OCI-LY7 (cell line): ENCODE measurements at regions of chr21 and their contacts with region 1.

Region 1: DNA sequence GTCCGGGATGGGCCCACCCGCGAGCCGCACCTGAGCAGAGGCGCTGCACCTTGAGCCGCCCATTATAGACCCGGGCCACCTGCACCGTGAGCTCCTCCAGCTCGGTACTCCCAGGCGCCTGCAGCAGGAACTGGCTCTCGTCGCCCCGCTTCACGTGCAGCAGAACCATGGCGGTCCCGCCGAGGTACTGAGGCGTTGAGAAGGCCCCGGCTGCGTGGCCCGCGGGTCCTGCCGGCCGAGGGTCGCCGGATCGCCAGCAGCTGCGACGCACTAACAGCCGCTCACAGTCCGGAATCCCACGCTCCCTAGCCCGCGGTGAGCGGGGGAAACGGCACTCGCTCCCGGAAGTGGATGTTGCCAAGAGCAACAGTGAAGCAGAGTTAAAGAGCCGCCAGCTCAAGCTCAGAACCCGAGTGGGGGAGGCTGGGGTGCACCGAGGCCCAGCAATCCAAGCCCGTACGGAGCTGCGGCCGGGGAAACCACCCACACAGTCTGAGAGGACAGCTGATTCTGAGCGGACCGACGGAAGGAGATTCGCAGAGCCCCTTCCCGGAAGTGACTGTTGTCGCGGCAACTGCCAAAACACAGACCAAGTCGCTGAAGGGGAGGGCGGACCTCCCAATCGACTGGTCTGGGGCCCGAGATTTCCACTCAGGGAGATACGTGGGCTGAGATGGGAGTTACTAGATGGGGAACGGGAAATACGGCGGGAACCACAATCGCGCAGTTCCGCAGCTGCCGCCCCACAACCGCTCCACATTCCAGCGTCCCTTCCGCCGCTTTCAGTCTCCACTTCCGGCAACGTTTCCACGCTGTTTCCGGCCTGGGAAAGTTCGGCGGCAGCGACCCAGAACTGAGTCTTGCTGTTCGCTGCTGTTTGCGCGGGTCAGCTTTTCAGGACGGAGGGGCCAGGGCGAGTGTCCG is at the start of gene CFAP298:
- DNase-seq: peak; percentile 89
- H3K4me3 ChIP-seq: peak within 1 kb of the TSS; percentile 88
- H3K27ac ChIP-seq: peak within 1 kb of the TSS; percentile 80
- H3K4me1 ChIP-seq: peaks cover 10% of the 10 kb centered on the region
- CTCF ChIP-seq: no peak
- total RNA-seq, gene CFAP298: 43.6 and 56.0 TPM in 2 replicates

Region 2: GRCh38 chr21:31731802-31732596 is 880.3 kb before region 1 on chr21 and contains the start of gene SCAF4:
- CTCF ChIA-PET with region 1: no interaction called
- POLR2A ChIA-PET with region 1: no interaction called
- intact Hi-C with region 1: loop called (anchors 5 kb)
- DNase-seq: peak; percentile 91
- H3K4me3 ChIP-seq: peak within 1 kb of the TSS; percentile 85
- H3K27ac ChIP-seq: peak within 1 kb of the TSS; percentile 90
- H3K4me1 ChIP-seq: peaks cover 55% of the 10 kb centered on the region
- CTCF ChIP-seq: no peak
- total RNA-seq, gene SCAF4: 22.5 and 25.9 TPM in 2 replicates

Region 3: DNA sequence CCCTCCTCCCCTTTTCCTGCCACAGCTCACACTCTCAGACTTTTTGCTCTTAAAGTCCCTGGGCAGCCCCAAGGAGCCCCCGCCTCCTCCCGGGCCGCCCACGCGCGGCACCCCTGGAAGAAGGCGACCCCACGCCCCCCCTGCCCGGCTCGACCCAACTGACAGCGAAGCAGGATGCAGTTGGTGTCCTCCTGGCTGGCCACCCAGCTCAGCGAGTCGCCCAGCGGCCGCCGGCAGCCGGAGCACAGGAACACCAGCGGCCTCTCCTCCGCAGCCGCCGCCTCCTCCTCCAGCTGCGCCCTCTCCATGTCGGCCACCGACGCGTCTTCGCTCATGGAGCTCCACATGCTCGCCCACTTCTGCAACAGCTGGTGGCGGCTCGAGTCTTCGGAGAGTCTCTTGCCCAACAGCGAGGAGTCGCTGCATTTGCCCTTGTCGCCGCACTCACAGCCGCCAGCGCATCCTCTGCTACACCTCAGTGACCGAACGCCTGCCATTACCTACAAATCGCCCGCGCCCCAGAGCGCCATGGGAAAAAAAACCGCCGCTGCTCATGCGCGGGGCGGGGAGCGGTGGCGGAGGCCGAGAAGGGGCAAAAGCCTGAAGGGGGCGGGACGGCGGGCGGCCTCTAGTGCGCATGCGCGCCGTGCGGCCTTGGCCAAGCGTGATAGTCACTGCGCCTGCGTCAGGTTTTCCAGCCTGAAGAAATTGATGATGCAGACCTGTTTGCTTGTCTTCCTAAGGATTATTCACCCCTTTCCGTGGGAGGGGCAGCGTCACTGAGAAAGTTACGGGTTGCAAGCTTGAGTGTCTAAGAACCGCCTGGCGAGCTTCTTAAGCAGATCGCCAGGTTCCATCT is 333.6 kb before region 1 on chr21 and contains the start of gene MIS18A:
- CTCF ChIA-PET with region 1: no interaction called
- POLR2A ChIA-PET with region 1: no interaction called
- intact Hi-C with region 1: loop called (anchors 5 kb)
- DNase-seq: peak; percentile 94
- H3K4me3 ChIP-seq: peak within 1 kb of the TSS; percentile 90
- H3K27ac ChIP-seq: peak within 1 kb of the TSS; percentile 80
- H3K4me1 ChIP-seq: peaks cover 23% of the 10 kb centered on the region
- CTCF ChIP-seq: 0 out of 2 replicates have a peak, but pooled peaks have one; percentile 17
- total RNA-seq, gene MIS18A: 25.2 and 31.7 TPM in 2 replicates

Region 4: GRCh38 chr21:32392880-32393676 is 219.3 kb before region 1 on chr21 and contains the start of gene URB1:
- CTCF ChIA-PET with region 1: no interaction called
- POLR2A ChIA-PET with region 1: interaction called, 4 read pairs
- intact Hi-C with region 1: loop called (anchors 2 kb)
- DNase-seq: peak; percentile 91
- H3K4me3 ChIP-seq: peak within 1 kb of the TSS; percentile 86
- H3K27ac ChIP-seq: peak within 1 kb of the TSS; percentile 35
- H3K4me1 ChIP-seq: peaks cover 34% of the 10 kb centered on the region
- CTCF ChIP-seq: no peak
- total RNA-seq, gene URB1: 19.4 and 20.8 TPM in 2 replicates